ENCODE measurements at regions of chr10 and their contacts with region 1.

Region 1: DNA sequence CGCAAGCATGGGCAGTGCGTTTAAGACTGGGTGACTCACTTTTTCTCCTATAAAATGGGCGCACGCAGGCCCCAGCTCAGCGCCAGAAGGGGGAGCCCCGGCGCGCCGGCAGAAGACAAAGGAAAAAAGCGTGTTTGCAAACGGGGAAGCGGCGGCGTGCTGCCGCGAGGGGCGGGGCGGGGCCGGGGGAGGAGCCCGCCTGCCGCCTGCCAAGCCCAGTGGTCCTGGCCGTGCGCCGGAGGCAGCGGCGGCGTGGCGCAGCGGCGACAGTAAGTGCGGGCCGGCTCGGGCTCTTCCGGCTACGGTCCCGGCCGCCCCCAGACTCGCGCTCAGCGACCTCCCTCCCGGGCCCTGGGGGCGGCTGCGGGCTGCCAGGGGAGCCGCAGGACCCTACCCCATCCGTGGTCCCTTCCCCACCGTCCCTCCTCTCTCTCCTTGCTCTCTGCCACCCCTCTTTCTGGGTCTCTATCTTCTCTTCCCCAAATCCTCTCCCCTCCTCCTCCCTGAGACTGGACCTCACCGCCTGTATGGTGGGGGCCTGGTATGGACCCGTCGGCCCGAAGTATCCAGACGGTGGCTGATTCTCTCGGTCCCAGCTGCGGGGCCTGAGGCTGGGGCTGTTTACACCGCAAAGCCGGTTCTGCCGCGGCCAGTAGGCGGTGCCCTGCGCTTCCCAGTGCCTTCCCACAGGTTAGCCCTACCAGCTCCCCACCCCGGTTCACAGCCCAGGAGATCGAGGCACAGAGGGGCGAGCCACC is at the start of gene SLC29A3:
- DNase-seq: peak; percentile 86 to 89 (median 88)
- ATAC-seq: peak; percentile 92 to 96 (median 93)
- H3K4me3 ChIP-seq: peak within 1 kb of the TSS; percentile 65 to 81 (median 77)
- H3K27ac ChIP-seq: peak within 1 kb of the TSS; percentile 65 to 74 (median 72)
- H3K4me1 ChIP-seq: peaks cover 0 to 24% (median 5%) of the 10 kb centered on the region in 4 donors
- H3K27me3 ChIP-seq: no peaks in the 10 kb centered on the region
- CTCF ChIP-seq: peak; percentile 65 to 67 (median 66)
- POLR2A ChIP-seq: peak; percentile 81
- total RNA-seq, gene SLC29A3: 5.7 to 17.4 (median 7.7) TPM

Region 2: DNA sequence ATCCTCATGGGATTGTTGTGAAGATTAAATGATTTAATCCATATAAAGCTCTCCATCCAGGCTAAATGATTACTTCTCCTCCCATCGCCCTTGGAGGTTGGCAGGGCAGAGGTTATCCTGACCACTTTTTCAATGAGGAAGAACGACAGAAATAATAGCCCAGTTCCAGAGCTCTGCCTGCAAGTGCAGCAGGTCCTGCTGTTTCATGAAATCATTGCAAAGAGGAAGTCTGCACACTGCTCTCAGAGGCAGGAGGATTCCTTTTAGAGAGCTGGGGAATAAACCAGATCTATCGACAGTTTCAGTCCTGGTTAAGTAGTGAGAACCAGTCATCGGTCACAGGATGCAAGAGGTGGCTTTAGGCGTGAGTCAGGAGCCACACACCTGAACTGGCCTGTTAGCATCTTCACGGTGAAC is 52.5 kb after region 1 on chr10:
- intact Hi-C with region 1: loop called (anchors 5 kb)
- DNase-seq: no peak
- ATAC-seq: peak; percentile 18 to 53 (median 26)
- H3K4me3 ChIP-seq: no peak overlapping the region
- H3K27ac ChIP-seq: no peak overlapping the region
- H3K4me1 ChIP-seq: peaks cover 0 to 6% (median 0%) of the 10 kb centered on the region in 4 donors
- H3K27me3 ChIP-seq: no peaks in the 10 kb centered on the region
- CTCF ChIP-seq: no peak
- POLR2A ChIP-seq: no peak

Region 3: GRCh38 chr10:71378336-71379117 is 59.3 kb after region 1 on chr10:
- intact Hi-C with region 1: loop called (anchors 5 kb)
- DNase-seq: no peak
- ATAC-seq: no peak
- H3K4me3 ChIP-seq: no peak overlapping the region
- H3K27ac ChIP-seq: no peak overlapping the region
- H3K4me1 ChIP-seq: peaks cover 0 to 8% (median 2%) of the 10 kb centered on the region in 4 donors
- H3K27me3 ChIP-seq: no peaks in the 10 kb centered on the region
- CTCF ChIP-seq: no peak
- POLR2A ChIP-seq: no peak

Region 4: DNA sequence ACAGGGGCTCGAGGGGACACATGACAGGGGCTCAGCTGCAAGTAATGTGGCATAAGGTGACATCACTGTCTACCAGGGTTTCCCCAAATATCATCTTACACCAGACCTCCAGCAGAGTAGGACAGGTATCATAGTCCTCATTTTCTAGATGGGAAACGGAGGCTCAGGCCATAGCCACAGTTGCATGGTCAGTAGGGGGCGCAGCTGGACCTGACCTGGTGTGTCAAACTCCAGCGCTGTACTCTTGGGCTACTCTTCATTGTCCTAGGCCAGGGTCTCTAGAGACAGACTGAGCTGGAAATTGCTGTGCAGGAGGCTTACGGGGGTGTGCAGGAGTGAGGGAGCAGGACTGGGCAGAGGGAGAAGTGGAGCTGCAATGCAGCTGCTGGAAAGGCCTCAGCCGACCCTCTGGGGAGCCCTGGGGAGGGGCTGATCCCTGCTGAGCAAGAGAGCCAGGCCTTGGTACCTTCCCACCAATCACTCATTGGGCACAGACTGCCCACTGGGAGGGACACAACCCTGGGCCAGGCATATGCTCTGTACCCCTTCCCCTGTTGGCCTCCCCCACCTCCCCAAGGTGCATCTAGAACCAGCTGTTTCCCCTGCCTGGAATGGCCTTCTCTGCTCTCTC is 167.4 kb after region 1 on chr10:
- intact Hi-C with region 1: loop called in 1 of 2 experiments (anchors 10 kb)
- DNase-seq: peak; percentile 65 to 72 (median 67)
- ATAC-seq: peak; percentile 69 to 89 (median 80)
- H3K4me3 ChIP-seq: no peak overlapping the region
- H3K27ac ChIP-seq: no peak overlapping the region
- H3K4me1 ChIP-seq: no peaks in the 10 kb centered on the region
- H3K27me3 ChIP-seq: no peaks in the 10 kb centered on the region
- CTCF ChIP-seq: peak; percentile 47 to 73 (median 56)
- POLR2A ChIP-seq: no peak

Region 5: GRCh38 chr10:71569775-71570588 is 250.8 kb after region 1 on chr10:
- intact Hi-C with region 1: loop called in 1 of 2 experiments (anchors 5 kb)
- DNase-seq: peak in 2 of 3 donors; percentile 57 to 79
- ATAC-seq: peak; percentile 71 to 90 (median 82)
- H3K4me3 ChIP-seq: no peak overlapping the region
- H3K27ac ChIP-seq: no peak overlapping the region
- H3K4me1 ChIP-seq: no peaks in the 10 kb centered on the region
- H3K27me3 ChIP-seq: no peaks in the 10 kb centered on the region
- CTCF ChIP-seq: peak; percentile 85 to 88 (median 86)
- POLR2A ChIP-seq: no peak

Region 6: GRCh38 chr10:71708301-71708703 is 389.1 kb after region 1 on chr10:
- intact Hi-C with region 1: loop called in 1 of 2 experiments (anchors 10 kb)
- DNase-seq: peak in 2 of 3 donors; percentile 69 to 75
- ATAC-seq: peak; percentile 49 to 71 (median 64)
- H3K4me3 ChIP-seq: no peak overlapping the region
- H3K27ac ChIP-seq: no peak overlapping the region
- H3K4me1 ChIP-seq: peaks cover 0 to 6% (median 0%) of the 10 kb centered on the region in 4 donors
- H3K27me3 ChIP-seq: no peaks in the 10 kb centered on the region
- CTCF ChIP-seq: peak; percentile 73 to 93 (median 82)
- POLR2A ChIP-seq: no peak

Region 7: DNA sequence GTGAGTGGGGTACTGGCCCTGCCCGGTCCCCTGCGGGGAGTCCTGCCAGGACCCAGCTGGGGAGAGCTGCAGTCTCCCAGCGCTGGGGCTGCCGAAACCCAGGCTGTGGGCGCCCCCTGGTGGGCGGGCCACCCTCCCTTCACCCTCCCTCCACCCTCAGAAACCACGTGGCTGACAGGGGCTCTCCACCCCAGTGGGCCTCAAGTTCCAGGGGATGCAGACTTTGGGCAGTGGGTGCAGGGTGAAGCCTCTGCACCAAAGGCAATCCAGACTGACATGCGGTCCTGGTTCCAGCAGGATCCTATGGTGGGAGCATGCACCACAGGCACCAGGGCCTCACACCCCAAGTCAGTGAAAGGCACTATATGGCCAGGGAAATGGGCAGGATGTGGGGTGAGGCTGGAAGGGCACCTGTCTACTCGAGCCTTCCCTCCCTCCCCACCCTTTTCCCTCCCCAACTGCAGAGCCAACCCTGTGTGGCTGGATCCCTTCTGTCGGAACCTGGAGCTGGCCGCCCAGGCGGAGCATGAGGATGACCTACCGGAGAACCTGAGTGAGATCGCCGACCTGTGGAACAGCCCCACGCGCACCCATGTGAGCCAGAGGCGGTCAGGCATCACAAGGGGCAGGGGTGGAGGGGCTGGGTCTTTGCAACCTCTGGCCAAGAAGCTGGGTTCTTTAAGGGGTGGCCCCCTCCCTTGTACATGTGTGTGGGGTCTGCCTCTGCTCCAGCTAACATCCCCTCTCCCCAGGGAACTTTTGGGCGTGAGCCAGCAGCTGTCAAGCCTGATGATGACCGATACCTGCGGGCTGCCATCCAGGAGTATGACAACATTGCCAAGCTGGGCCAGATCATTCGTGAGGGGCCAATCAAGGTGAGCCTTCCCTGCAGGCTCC is 493.0 kb after region 1 on chr10:
- intact Hi-C with region 1: loop called in 1 of 2 experiments (anchors 10 kb)
- DNase-seq: peak; percentile 73 to 83 (median 76)
- ATAC-seq: peak; percentile 77 to 88 (median 84)
- H3K4me3 ChIP-seq: no peak overlapping the region
- H3K27ac ChIP-seq: no peak overlapping the region
- H3K4me1 ChIP-seq: no peaks in the 10 kb centered on the region
- H3K27me3 ChIP-seq: no peaks in the 10 kb centered on the region
- CTCF ChIP-seq: peak; percentile 81 to 90 (median 85)
- POLR2A ChIP-seq: no peak